Right lobe of liver (tissue), 6 donors: ENCODE measurements at regions of chrX and their contacts with region 1.

Region 1: GRCh38 chrX:19535476-19535875 is 20.2 kb upstream of the MAP3K15 start:
- DNase-seq: no peak
- ATAC-seq: peak in 1 of 4 donors; percentile 30
- H3K4me3 ChIP-seq: no peak overlapping the region
- H3K27ac ChIP-seq: no peak overlapping the region
- H3K4me1 ChIP-seq: no peaks in the 10 kb centered on the region
- H3K27me3 ChIP-seq: no peaks in the 10 kb centered on the region
- CTCF ChIP-seq: peak; percentile 11 to 36 (median 32)
- POLR2A ChIP-seq: no peak

Region 2: GRCh38 chrX:19372170-19372546 is 163.3 kb before region 1 on chrX:
- intact Hi-C with region 1: loop called in 1 of 2 experiments (anchors 10 kb)
- DNase-seq: peak; percentile 47 to 62 (median 58)
- ATAC-seq: peak; percentile 85 to 92 (median 92)
- H3K4me3 ChIP-seq: peak overlapping the region; percentile 2 to 37 (median 24)
- H3K27ac ChIP-seq: no peak overlapping the region
- H3K4me1 ChIP-seq: no peaks in the 10 kb centered on the region
- H3K27me3 ChIP-seq: no peaks in the 10 kb centered on the region
- CTCF ChIP-seq: peak; percentile 61 to 69 (median 64)
- POLR2A ChIP-seq: no peak

Region 3: GRCh38 chrX:19602866-19603622 is 67.6 kb after region 1 on chrX:
- intact Hi-C with region 1: no loop called
- DNase-seq: no peak
- ATAC-seq: no peak
- H3K4me3 ChIP-seq: no peak overlapping the region
- H3K27ac ChIP-seq: no peak overlapping the region
- H3K4me1 ChIP-seq: no peaks in the 10 kb centered on the region
- H3K27me3 ChIP-seq: no peaks in the 10 kb centered on the region
- CTCF ChIP-seq: no peak
- POLR2A ChIP-seq: no peak